ENCODE measurements at regions of chr12 and their contacts with region 1.

Region 1: GRCh38 chr12:50283229-50283923 is at the start of gene LIMA1:
- DNase-seq: peak; percentile 86 to 90
- ATAC-seq: peak; percentile 90 to 94
- H3K4me3 ChIP-seq: peak within 1 kb of the TSS; percentile 79 to 95 (median 87)
- H3K27ac ChIP-seq: peak within 1 kb of the TSS; percentile 80 to 94 (median 88)
- H3K4me1 ChIP-seq: peaks cover 29 to 33% of the 10 kb centered on the region in 2 donors
- H3K27me3 ChIP-seq: no peaks in the 10 kb centered on the region
- CTCF ChIP-seq: peak in 4 of 5 experiments; percentile 54 to 72 (median 66)
- POLR2A ChIP-seq: peak; percentile 46 to 50
- total RNA-seq, gene LIMA1: 7.4 to 24.5 (median 8.8) TPM

Region 2: GRCh38 chr12:49990273-49990672 is 293.1 kb before region 1 on chr12:
- in situ Hi-C with region 1: no loop called
- intact Hi-C with region 1: no loop called
- DNase-seq: no peak
- ATAC-seq: no peak
- H3K4me3 ChIP-seq: no peak overlapping the region
- H3K27ac ChIP-seq: no peak overlapping the region
- H3K4me1 ChIP-seq: no peaks in the 10 kb centered on the region
- H3K27me3 ChIP-seq: no peaks in the 10 kb centered on the region
- CTCF ChIP-seq: no peak
- POLR2A ChIP-seq: no peak

Region 3: GRCh38 chr12:50151047-50151687 is 132.2 kb before region 1 on chr12:
- in situ Hi-C with region 1: no loop called
- intact Hi-C with region 1: no loop called
- DNase-seq: no peak
- ATAC-seq: no peak
- H3K4me3 ChIP-seq: no peak overlapping the region
- H3K27ac ChIP-seq: no peak overlapping the region
- H3K4me1 ChIP-seq: peaks cover 5 to 6% of the 10 kb centered on the region in 2 donors
- H3K27me3 ChIP-seq: no peaks in the 10 kb centered on the region
- CTCF ChIP-seq: no peak
- POLR2A ChIP-seq: no peak

Region 4: GRCh38 chr12:50211392-50212070 is 71.8 kb before region 1 on chr12:
- in situ Hi-C with region 1: loop called in 1 of 4 experiments (anchors 10 kb)
- intact Hi-C with region 1: no loop called
- DNase-seq: no peak
- ATAC-seq: no peak
- H3K4me3 ChIP-seq: no peak overlapping the region
- H3K27ac ChIP-seq: peak overlapping the region; percentile 30 to 75 (median 60)
- H3K4me1 ChIP-seq: peaks cover 0 to 8% of the 10 kb centered on the region in 2 donors
- H3K27me3 ChIP-seq: no peaks in the 10 kb centered on the region
- CTCF ChIP-seq: no peak
- POLR2A ChIP-seq: no peak

Region 5: GRCh38 chr12:50222275-50222795 is 61.0 kb before region 1 on chr12:
- in situ Hi-C with region 1: loop called in 1 of 4 experiments (anchors 10 kb)
- intact Hi-C with region 1: loop called (anchors 1 kb)
- DNase-seq: peak; percentile 39 to 45
- ATAC-seq: peak; percentile 61 to 73
- H3K4me3 ChIP-seq: peak overlapping the region; percentile 45 to 54 (median 46)
- H3K27ac ChIP-seq: peak overlapping the region; percentile 60 to 78 (median 76)
- H3K4me1 ChIP-seq: peaks cover 19 to 29% of the 10 kb centered on the region in 2 donors
- H3K27me3 ChIP-seq: no peaks in the 10 kb centered on the region
- CTCF ChIP-seq: peak in 1 of 5 experiments; percentile 27
- POLR2A ChIP-seq: peak; percentile 16 to 29

Region 6: DNA sequence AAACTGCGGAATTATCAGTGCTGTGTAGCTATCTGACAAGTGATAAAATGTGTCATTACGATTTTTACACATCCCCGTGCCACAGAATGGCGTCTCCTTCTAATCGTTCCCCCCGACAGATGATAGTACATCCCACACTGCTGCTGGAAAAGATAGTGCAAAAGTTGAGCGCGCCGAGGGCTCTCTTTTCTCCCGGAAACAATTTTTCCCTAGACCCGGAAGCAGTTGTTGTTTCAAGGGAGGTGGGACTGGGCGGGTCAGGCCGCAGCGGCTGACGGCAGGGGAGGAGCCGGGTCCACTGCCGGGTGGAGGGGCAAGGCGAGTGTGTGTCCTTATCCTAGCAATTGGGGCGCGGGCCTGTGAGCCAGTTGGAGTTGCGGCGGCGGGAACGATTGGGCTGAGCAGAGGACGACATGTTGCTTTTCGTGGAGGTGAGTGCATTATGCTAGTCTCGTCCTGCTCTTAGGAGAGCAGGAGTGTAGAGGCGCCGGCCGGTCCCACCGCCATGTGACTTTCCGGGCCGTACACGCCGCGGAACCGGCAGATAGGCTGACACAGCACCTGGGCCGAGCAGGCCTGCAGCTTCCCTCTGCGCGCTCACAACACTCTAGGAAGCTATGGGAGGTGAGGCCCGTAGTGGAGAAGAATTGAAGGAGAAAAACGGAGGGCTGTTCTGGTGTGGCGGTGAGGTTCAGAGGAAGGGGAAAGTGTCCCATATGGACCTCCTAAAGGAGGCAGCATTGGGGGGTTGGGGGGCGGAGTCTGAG is 117.4 kb after region 1 on chr12 and contains the start of gene LARP4:
- in situ Hi-C with region 1: no loop called
- intact Hi-C with region 1: loop called (anchors 5 kb)
- DNase-seq: peak; percentile 91 to 93
- ATAC-seq: peak; percentile 94 to 95
- H3K4me3 ChIP-seq: peak within 1 kb of the TSS; percentile 75 to 93 (median 83)
- H3K27ac ChIP-seq: peak within 1 kb of the TSS; percentile 92 to 98 (median 96)
- H3K4me1 ChIP-seq: peaks cover 20 to 24% of the 10 kb centered on the region in 2 donors
- H3K27me3 ChIP-seq: no peaks in the 10 kb centered on the region
- CTCF ChIP-seq: no peak
- POLR2A ChIP-seq: peak; percentile 95 to 96
- total RNA-seq, gene LARP4: 32.7 to 70.2 (median 42.4) TPM